Right cardiac atrium (tissue), 5 donors: ENCODE measurements at regions of chr2 and their contacts with region 1.

Region 1: GRCh38 chr2:41869542-41870264 is 178.1 kb upstream of the PKDCC start:
- DNase-seq: peak; percentile 83 to 92 (median 92)
- ATAC-seq: peak; percentile 87 to 90
- H3K4me3 ChIP-seq: no peak overlapping the region
- H3K27ac ChIP-seq: no peak overlapping the region
- H3K4me1 ChIP-seq: no peaks in the 10 kb centered on the region
- H3K27me3 ChIP-seq: no peaks in the 10 kb centered on the region

Region 2: GRCh38 chr2:41933585-41934320 is 64.0 kb after region 1 on chr2:
- intact Hi-C with region 1: loop called in 1 of 4 experiments (anchors 10 kb)
- DNase-seq: no peak
- ATAC-seq: peak; percentile 42 to 45
- H3K4me3 ChIP-seq: no peak overlapping the region
- H3K27ac ChIP-seq: peak overlapping the region; percentile 93
- H3K4me1 ChIP-seq: peaks cover 18% of the 10 kb centered on the region
- H3K27me3 ChIP-seq: no peaks in the 10 kb centered on the region

Region 3: DNA sequence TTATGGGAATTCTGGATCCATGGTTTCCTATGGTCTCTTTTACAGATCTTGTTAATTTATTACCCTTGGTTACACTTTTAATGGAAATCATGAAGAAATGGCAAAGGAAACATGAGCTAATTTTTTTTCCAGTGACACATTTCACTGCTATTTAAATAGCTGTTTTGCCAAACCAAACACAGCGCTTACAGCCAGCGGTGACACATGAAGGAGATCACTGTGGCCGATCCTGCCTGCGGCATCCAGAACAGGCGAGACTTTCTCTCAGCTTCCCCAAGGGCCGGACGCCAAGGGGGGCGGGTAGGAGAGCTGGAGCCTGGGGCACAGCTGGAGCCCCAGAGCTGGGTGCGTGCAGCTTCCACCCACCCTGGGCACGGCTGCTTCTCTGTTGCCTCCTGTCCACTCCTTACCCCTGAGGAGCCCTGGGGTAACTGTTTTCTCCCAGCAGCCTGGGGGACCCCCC is 96.8 kb after region 1 on chr2:
- intact Hi-C with region 1: loop called in 1 of 4 experiments (anchors 10 kb)
- DNase-seq: peak; percentile 96 to 98 (median 97)
- ATAC-seq: peak; percentile 83 to 91
- H3K4me3 ChIP-seq: no peak overlapping the region
- H3K27ac ChIP-seq: peak overlapping the region; percentile 98
- H3K4me1 ChIP-seq: peaks cover 24% of the 10 kb centered on the region
- H3K27me3 ChIP-seq: no peaks in the 10 kb centered on the region

Region 4: DNA sequence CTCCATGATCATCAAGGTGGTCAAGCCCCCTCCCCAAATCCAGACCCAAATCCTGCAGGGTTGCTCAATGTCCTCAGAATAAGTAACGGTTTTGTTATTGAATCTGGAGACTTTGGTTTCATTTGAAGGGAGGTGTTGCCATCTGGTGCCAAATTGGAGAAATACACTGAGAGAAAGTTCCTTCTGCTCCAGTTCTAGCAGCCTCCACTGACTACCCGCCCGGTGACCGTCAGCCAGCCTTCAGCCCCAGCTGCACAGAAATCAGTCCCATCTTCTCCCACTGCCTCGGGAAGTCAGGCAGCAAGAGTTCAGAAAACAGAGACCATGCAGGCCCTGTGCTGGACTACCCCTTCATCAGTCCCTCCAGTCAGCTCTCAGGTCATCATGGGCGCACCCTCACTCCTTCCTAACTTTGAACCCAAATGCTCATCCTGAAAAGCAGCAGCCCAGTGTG is 216.8 kb after region 1 on chr2:
- intact Hi-C with region 1: loop called (anchors 2 to 5 kb)
- DNase-seq: peak; percentile 32 to 65 (median 57)
- ATAC-seq: peak; percentile 27 to 64
- H3K4me3 ChIP-seq: no peak overlapping the region
- H3K27ac ChIP-seq: no peak overlapping the region
- H3K4me1 ChIP-seq: peaks cover 6% of the 10 kb centered on the region
- H3K27me3 ChIP-seq: no peaks in the 10 kb centered on the region

Region 5: DNA sequence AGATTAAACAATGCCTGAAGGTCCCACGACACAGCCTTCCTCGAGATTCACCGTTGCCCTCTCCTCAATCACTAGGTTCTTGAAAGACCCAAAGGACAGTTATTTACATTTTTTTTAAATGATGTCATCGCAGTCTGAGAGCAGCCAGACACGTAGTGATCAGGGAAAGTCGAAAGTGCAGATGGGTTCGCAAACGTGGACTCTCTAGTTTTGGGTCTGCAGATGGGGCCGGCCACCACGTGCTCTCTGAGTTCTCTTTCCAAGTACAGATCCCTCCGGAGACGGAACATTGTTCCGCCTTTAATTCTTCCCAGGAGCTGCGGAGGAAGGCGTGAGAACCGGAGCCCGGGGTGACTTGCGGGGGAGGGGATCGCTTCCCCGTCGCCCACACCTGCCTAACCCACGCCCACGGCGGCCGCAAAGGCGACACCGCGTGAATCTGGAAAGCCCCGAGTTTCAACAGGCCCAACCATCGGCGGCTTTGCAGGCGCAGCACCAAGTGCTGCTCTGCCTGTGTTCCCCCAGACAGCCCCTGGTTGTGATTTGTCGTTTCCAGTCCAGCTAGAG is 232.4 kb after region 1 on chr2:
- intact Hi-C with region 1: no loop called
- DNase-seq: peak; percentile 57 to 83 (median 80)
- ATAC-seq: peak; percentile 51 to 59
- H3K4me3 ChIP-seq: peak overlapping the region; percentile 36
- H3K27ac ChIP-seq: peak overlapping the region; percentile 53
- H3K4me1 ChIP-seq: peaks cover 8% of the 10 kb centered on the region
- H3K27me3 ChIP-seq: no peaks in the 10 kb centered on the region

Region 6: DNA sequence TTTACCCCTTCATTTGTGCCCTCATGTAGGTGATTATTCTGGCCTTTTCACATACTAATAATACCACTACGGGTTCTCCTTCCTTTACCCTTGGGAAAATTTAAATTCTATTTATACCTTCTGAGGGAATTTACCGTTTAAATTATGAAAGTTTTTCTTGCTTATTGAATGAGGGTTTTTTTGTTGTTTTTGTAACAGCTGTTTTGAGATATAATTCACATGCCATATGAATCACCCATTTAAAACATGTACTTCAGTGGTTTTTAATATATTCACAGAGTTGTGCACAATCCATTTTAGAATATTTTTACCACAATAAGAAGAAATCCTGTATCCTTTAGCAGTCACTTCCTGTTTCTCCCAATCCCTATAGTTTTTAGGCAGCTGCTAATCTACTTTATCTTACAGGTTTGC is 354.2 kb after region 1 on chr2:
- intact Hi-C with region 1: no loop called
- DNase-seq: no peak
- ATAC-seq: no peak
- H3K4me3 ChIP-seq: no peak overlapping the region
- H3K27ac ChIP-seq: no peak overlapping the region
- H3K4me1 ChIP-seq: no peaks in the 10 kb centered on the region
- H3K27me3 ChIP-seq: no peaks in the 10 kb centered on the region

Region 7: DNA sequence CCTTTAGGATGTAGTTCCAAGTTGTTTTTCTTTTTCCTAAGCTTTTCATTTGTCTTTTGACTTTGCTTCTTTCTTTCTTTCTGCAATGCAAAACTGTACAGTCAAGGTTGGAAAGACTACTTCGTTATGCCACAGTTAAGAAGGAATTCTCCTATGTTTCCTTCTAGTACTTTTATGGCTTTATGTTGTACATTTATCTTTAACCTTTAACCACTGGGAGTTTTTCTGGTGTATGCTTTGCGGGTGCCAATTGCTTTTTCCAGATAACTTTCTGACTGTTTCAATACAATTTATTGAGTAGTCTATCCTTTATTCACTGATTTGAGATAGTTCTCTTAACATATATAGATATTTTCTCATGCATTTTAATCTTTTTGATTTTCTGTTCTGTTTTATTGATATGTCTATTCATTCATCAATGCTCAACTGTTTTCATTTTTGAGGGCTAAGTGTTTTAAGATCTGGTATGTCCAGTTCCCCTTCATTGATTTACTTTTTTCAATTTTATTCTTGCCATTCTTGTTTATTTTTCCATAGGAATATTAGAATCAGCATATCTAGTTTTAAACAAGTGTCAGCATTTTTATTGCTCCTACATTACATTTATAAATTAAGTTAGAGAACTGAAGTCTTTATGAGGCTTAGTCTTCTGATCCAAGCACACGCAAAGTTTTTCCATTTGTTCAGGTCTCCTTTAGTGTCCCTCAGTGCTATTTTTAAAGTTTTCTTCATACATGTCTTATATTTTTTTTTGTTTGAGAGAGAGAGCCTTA is 541.2 kb after region 1 on chr2:
- intact Hi-C with region 1: no loop called
- DNase-seq: no peak
- ATAC-seq: no peak
- H3K4me3 ChIP-seq: no peak overlapping the region
- H3K27ac ChIP-seq: no peak overlapping the region
- H3K4me1 ChIP-seq: no peaks in the 10 kb centered on the region
- H3K27me3 ChIP-seq: no peaks in the 10 kb centered on the region